ENCODE measurements at regions of chr14 and their contacts with region 1.

Region 1: DNA sequence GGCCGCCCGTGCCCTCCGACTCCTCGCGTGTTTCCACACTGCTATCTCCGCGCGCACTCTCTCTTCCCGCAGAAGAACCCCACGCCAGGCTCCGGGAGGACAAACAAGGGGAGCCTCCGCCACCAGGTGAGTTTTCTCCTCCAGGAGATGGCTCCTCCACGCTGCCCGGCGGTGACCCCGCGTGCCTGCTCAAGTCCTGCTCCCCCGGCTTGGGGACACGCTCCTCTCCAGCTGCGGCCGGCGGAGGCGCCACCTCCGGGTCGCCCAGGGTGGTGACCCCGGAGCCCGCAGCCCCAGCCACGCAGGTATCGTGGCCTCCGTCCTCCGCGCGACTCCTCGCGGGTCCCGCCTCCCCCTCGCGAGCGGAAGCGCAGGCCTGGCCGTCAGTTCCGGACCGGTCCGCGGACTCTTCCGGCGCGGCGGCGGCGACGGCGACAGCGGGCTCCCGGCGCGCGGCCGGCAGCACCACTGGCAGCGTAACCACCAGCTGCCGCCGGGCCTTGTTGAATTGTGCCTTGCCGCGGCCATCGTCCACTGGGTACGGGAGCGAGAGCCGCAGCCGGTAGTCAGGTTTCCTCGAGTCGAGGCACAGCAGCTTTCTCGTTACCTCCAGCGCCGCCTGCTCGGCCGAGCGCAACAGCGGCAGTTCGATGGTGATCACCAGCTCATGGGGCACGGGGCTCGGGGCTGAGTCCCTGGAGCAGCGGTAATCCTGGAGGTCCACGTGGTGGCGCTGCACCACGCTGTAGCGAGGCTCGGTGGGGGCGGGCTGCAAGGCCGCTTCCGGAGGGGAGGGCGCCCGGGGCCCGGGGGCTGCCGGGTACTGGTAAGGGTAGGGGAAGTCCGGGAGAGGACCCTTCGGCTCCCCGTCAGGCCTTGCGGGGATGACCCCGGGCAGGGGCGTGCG is 1.2 kb downstream of the DNAAF2 start:
- DNase-seq: peak; percentile 95
- H3K4me3 Mint-ChIP-seq: peak overlapping the region; percentile 88
- H3K27ac Mint-ChIP-seq: peak overlapping the region; percentile 81
- H3K4me1 Mint-ChIP-seq: peaks cover 45% of the 10 kb centered on the region
- H3K27me3 Mint-ChIP-seq: no peaks in the 10 kb centered on the region

Region 2: DNA sequence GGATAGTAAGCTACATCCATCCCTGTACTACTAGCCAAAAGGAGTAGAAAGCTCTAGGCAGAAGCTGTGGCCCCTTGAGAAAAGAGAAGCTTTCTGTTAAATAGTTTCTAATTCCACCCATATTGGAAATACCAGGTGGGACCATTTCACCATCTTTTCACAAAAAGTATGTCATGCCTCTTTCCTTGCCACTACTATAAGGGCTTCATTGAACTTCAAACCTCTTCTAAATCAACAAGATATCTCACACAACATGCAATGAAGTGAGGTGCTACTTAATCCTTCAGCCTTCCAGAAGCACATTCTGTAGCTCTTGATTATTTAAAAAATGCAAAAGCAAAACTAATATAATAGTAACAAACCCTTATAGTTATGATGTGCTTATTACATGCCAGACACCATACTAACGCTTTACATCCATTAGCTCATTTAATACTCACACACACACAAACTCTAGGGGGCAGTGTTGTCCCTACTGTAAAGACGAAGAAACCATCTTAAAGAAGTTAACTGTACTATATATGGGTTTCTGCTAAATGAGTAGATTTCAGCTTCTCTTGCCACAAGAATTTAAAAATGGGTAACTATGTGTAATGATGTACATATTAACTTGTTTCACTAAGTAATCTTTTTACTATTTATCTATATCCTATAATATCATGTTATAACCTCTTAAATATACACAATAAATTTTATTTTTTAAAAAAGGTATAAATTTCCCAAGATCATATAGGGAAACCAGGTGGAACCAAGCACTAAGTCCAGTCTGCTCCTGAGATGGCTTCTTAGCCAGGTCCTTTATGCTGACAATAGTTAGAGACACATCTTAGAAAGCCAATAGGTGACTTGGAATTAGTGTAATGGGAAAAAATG is 172.1 kb before region 1 on chr14:
- CTCF ChIA-PET with region 1: interaction called, 11 read pairs
- POLR2A ChIA-PET with region 1: no interaction called
- DNase-seq: peak; percentile 54
- H3K4me3 Mint-ChIP-seq: no peak overlapping the region
- H3K27ac Mint-ChIP-seq: no peak overlapping the region
- H3K4me1 Mint-ChIP-seq: no peaks in the 10 kb centered on the region
- H3K27me3 Mint-ChIP-seq: peaks cover 5% of the 10 kb centered on the region

Region 3: GRCh38 chr14:49492131-49492530 is 141.8 kb before region 1 on chr14:
- CTCF ChIA-PET with region 1: no interaction called
- POLR2A ChIA-PET with region 1: no interaction called
- DNase-seq: no peak
- H3K4me3 Mint-ChIP-seq: no peak overlapping the region
- H3K27ac Mint-ChIP-seq: no peak overlapping the region
- H3K4me1 Mint-ChIP-seq: no peaks in the 10 kb centered on the region
- H3K27me3 Mint-ChIP-seq: peaks cover 15% of the 10 kb centered on the region

Region 4: GRCh38 chr14:49598485-49599300 is 35.2 kb before region 1 on chr14 and contains the start of gene LRR1:
- CTCF ChIA-PET with region 1: interaction called, 6 read pairs
- POLR2A ChIA-PET with region 1: interaction called, 43 read pairs
- DNase-seq: peak; percentile 88
- H3K4me3 Mint-ChIP-seq: peak within 1 kb of the TSS; percentile 95
- H3K27ac Mint-ChIP-seq: peak within 1 kb of the TSS; percentile 95
- H3K4me1 Mint-ChIP-seq: peaks cover 47% of the 10 kb centered on the region
- H3K27me3 Mint-ChIP-seq: no peaks in the 10 kb centered on the region
- total RNA-seq, gene LRR1: 48.7 to 53.2 TPM

Region 5: DNA sequence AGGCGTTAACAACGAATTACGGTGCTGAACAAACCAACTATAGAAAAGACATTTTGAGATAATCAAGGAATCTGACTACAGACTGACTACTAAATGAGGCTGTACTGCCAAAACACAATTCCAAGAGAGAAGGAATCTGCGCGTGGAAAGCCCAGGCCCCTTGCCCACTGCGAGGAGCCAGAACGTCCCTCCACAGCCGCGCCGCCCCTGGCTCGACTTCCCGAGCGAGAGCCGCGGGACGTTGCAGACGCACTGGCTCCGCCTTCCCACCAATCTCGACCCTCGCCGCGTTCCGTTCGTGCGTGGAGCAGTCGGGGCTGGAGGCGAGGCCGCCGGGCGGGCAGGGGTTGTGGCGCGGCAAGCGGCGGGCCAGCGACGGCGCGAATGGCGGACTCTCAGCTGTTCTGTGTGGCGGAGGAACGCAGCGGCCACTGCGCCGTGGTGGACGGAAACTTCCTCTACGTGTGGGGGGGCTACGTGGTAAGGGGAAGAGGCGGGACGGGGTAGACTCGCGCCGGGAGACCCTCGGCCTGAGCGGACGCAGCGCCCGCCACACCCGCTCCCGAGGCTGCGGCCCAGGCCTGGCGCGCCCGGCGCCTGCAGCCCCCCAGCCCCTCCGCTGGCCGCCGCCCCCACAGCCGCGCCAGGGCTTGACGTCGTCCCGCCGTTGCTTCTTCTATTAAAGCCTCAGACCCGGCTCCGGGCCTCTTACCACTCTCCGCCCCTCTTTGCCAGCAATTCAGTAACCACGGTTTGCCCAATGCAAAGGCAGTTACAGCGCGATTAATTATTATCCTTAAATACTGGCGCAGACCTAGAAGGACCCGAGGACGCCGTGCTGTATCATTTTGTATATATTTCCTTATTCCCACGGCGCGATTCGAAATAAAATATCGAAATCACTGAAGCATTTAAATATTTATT is 59.2 kb after region 1 on chr14 and contains the start of gene KLHDC1:
- CTCF ChIA-PET with region 1: interaction called, 10 read pairs
- POLR2A ChIA-PET with region 1: interaction called, 15 read pairs
- DNase-seq: peak; percentile 77
- H3K4me3 Mint-ChIP-seq: peak within 1 kb of the TSS; percentile 72
- H3K27ac Mint-ChIP-seq: peak within 1 kb of the TSS; percentile 66
- H3K4me1 Mint-ChIP-seq: peaks cover 38% of the 10 kb centered on the region
- H3K27me3 Mint-ChIP-seq: no peaks in the 10 kb centered on the region
- total RNA-seq, gene KLHDC1: 2.4 to 2.6 TPM

Region 6: DNA sequence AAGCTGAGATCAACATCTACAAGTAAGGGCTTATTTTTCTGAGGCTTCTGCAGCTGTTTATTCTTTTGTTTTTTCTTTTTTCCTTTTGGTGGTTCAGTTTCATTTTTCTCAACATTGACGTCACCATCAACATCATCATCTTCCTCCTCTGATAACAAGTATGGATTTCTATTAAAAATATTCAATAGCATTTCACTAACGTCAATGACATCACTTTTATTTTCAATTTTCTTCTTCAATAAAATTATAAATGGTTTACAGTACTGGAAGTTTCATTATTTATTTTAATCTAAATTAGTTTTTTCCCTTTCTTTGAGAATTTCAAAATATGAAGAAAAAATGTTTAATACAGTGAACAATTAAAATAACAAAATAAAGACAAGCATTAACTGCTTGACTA is 194.7 kb after region 1 on chr14:
- CTCF ChIA-PET with region 1: interaction called, 44 read pairs
- POLR2A ChIA-PET with region 1: interaction called, 5 read pairs
- DNase-seq: no peak
- H3K4me3 Mint-ChIP-seq: no peak overlapping the region
- H3K27ac Mint-ChIP-seq: no peak overlapping the region
- H3K4me1 Mint-ChIP-seq: peaks cover 5% of the 10 kb centered on the region
- H3K27me3 Mint-ChIP-seq: no peaks in the 10 kb centered on the region

Measured in activated CD4-positive, alpha-beta memory T cell treated with anti-CD3 and anti-CD28 coated beads, Interleukin-2, amount 10 ng/mL, durations not matched to agents 7 days and 5 days (primary cell).